HEK293 (cell line): ENCODE measurements at regions of chr14 and their contacts with region 1.

Region 1: GRCh38 chr14:58166005-58166983 is 14.3 kb upstream of the ARMH4 start:
- H3K4me3 ChIP-seq: no peak overlapping the region
- H3K27ac ChIP-seq: no peak overlapping the region
- H3K4me1 ChIP-seq: no peaks in the 10 kb centered on the region
- CTCF ChIP-seq: 0 out of 2 replicates have a peak, but pooled peaks have one; percentile 45

Region 2: DNA sequence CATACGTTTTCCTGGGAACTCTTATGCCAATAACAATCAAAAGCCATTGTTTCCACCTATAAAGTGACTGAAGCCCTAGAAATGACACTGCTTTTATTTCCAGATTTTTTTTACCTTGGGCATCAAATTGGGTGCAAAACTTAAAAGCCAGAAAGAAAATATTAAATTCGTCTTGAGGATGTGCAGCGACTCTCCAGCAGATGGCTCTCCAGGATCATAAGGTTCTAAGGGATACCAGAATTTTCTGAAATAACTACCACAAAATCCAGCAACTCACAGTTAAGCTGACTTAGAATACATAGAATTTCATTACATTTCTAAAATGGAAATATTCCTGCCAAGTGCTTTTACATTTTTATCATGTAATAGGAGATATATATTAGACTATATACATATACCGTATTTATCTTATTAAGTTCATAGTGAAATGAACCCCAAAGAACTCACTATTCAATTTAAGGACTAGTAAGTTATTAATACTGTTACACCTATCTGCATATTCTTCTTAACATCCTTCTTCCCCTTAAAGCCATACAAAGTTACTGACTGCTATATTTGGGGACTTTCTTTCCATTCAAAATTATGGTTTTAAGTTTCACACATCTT is 58.2 kb before region 1 on chr14:
- CTCF ChIA-PET with region 1: interaction called, 72 read pairs
- POLR2A ChIA-PET with region 1: no interaction called
- H3K4me3 ChIP-seq: no peak overlapping the region
- H3K27ac ChIP-seq: no peak overlapping the region
- H3K4me1 ChIP-seq: 0 out of 2 replicates have a peak, but pooled peaks cover 2% of the 10 kb centered on the region
- CTCF ChIP-seq: no peak

Region 3: DNA sequence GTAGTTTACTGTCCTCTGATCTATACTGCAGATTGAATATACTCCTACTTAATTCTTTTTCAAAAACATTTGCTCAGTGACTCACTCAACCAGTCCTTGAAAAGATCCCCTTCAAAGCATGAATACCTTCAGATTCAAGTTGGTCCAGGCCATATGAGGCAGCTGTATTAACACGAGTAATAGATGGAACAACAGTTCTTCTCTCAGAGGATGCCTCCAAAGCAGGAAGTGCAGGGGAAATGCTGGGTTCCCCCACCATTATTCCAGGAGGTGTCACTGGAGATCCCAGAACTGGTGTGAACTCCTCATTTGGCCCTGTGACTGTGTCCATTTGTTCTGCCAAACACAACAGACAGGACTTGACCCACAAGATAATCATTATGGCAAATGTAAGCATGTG is 34.9 kb before region 1 on chr14:
- CTCF ChIA-PET with region 1: interaction called, 15 read pairs
- POLR2A ChIA-PET with region 1: no interaction called
- H3K4me3 ChIP-seq: no peak overlapping the region
- H3K27ac ChIP-seq: no peak overlapping the region
- H3K4me1 ChIP-seq: no peaks in the 10 kb centered on the region
- CTCF ChIP-seq: no peak

Region 4: DNA sequence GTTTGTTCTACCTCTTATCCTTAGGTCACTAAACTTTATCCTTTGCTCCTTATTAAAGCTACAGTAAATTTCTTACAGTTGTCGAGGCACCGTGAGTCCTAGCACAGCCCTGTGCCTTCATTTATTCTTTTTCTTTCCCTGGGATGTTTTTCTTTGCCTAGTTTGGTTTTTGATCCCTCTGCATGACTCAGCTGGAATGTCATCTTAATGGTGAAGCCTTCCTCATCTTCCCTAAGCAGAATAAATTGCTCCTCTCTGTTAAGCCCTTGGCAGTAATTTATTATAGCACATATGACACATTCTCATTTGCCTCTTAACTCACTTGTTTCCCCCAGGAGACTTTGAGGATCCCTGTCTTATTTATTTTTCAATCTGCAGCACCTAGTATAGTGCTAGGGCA is 50.2 kb after region 1 on chr14:
- CTCF ChIA-PET with region 1: no interaction called
- POLR2A ChIA-PET with region 1: no interaction called
- H3K4me3 ChIP-seq: no peak overlapping the region
- H3K27ac ChIP-seq: no peak overlapping the region
- H3K4me1 ChIP-seq: no peaks in the 10 kb centered on the region
- CTCF ChIP-seq: no peak

Region 5: GRCh38 chr14:58258156-58258555 is 91.9 kb after region 1 on chr14:
- CTCF ChIA-PET with region 1: no interaction called
- POLR2A ChIA-PET with region 1: no interaction called
- H3K4me3 ChIP-seq: no peak overlapping the region
- H3K27ac ChIP-seq: no peak overlapping the region
- H3K4me1 ChIP-seq: no peaks in the 10 kb centered on the region
- CTCF ChIP-seq: no peak

Region 6: DNA sequence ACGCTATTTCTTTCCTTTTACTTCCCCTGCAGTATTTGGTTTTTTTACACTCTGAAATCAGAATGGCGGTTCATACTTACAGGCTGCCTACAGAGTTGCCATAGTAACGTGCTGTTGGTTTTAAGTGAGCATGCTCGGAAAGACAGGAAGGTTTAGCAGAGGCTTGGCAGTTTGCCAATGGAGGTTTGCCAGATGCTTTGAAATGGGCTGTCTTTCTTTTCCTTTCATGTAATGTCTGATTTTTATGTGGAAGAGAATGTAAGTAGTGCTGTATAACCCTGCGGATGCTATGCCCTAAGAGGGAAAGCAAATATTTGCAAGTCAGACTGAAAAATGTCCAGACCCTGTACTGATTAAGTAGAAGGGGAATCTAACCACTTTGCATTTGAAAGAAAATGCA is 164.8 kb after region 1 on chr14:
- CTCF ChIA-PET with region 1: no interaction called
- POLR2A ChIA-PET with region 1: no interaction called
- H3K4me3 ChIP-seq: no peak overlapping the region; the same call in 1 of the 2 replicates
- H3K27ac ChIP-seq: no peak overlapping the region
- H3K4me1 ChIP-seq: peaks cover 4% of the 10 kb centered on the region
- CTCF ChIP-seq: no peak